Naive thymus-derived CD4-positive, alpha-beta T cell (primary cell): ENCODE measurements at regions of chr6 and their contacts with region 1.

Region 1: DNA sequence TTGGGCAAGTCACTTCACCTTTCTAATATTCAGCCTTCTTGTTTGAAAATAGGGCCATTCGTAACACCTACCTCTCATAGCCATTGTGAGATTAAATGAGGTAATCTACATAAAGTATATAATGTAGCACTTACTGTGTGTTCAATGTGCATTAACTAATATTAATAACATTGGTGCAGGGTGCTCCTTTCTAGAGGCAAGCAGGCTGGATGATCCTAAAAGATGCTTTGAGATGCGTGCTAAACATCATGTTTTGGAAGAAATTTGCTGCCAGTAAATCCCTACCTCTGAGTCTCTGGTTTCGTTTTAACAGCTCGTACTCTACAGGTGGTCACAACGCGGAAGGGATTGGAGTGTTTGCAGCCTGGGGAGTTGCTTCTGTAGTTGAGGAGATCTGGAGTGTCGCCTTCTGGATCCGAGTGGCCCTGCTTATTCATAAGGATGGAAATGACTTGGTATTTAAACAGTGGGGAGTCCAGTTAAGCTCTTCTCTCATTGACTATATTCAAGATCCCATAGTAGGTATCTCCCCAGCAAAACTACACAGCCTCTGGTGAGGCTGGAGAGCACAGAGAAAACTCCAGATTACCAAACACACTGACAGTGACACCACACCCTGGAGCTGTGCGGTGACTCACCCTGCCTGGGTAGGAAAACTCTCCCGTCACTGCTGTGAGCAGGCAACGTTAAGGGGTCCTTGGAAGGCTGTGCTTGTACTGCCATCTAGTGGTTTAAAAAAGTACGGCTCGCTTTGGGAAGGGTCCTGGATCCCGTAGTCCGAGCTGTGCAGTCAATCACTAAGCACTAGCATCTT is 107.9 kb downstream of the MAP3K7 start:
- DNase-seq: peak; percentile 57 to 87 (median 80)
- ATAC-seq: peak; percentile 98
- H3K4me3 ChIP-seq: no peak overlapping the region
- H3K4me3 Mint-ChIP-seq: peak overlapping the region in 4 of 10 donors; percentile 29 to 62 (median 53)
- H3K27ac ChIP-seq: no peak overlapping the region
- H3K27ac Mint-ChIP-seq: peak overlapping the region in 8 of 9 donors; percentile 3 to 89 (median 58)
- H3K4me1 ChIP-seq: peaks cover 6 to 13% of the 10 kb centered on the region in 2 donors
- H3K4me1 Mint-ChIP-seq: peaks cover 9 to 54% (median 26%) of the 10 kb centered on the region in 7 donors
- H3K27me3 ChIP-seq: no peaks in the 10 kb centered on the region
- H3K27me3 Mint-ChIP-seq: no peaks in the 10 kb centered on the region

Region 2: GRCh38 chr6:89432875-89433251 is 1046.1 kb before region 1 on chr6 and contains the start of gene ANKRD6:
- CTCF ChIA-PET with region 1: no interaction called
- POLR2A ChIA-PET with region 1: no interaction called
- intact Hi-C with region 1: loop called (anchors 1 to 2 kb)
- DNase-seq: peak; percentile 61 to 96 (median 81)
- ATAC-seq: peak; percentile 98
- H3K4me3 ChIP-seq: peak within 1 kb of the TSS; percentile 63
- H3K4me3 Mint-ChIP-seq: peak within 1 kb of the TSS; percentile 83 to 95 (median 90)
- H3K27ac ChIP-seq: peak within 1 kb of the TSS; percentile 46
- H3K27ac Mint-ChIP-seq: peak within 1 kb of the TSS; percentile 43 to 93 (median 82)
- H3K4me1 ChIP-seq: peaks cover 7 to 13% of the 10 kb centered on the region in 2 donors
- H3K4me1 Mint-ChIP-seq: peaks cover 9 to 36% (median 22%) of the 10 kb centered on the region in 7 donors
- H3K27me3 ChIP-seq: no peaks in the 10 kb centered on the region
- H3K27me3 Mint-ChIP-seq: peaks cover 0 to 58% (median 0%) of the 10 kb centered on the region in 5 donors
- total RNA-seq, gene ANKRD6: 3.1 to 6.6 (median 3.8) TPM

Region 3: GRCh38 chr6:89819336-89820130 is 659.5 kb before region 1 on chr6 and contains the start of gene MDN1:
- CTCF ChIA-PET with region 1: no interaction called
- POLR2A ChIA-PET with region 1: no interaction called
- intact Hi-C with region 1: loop called in 1 of 2 experiments (anchors 2 kb)
- DNase-seq: peak; percentile 60 to 89 (median 87)
- ATAC-seq: peak; percentile 96
- H3K4me3 ChIP-seq: peak within 1 kb of the TSS; percentile 66
- H3K4me3 Mint-ChIP-seq: peak within 1 kb of the TSS; percentile 92 to 97 (median 96)
- H3K27ac ChIP-seq: peak within 1 kb of the TSS; percentile 75
- H3K27ac Mint-ChIP-seq: peak within 1 kb of the TSS; percentile 92 to 98 (median 96)
- H3K4me1 ChIP-seq: peaks cover 12 to 19% of the 10 kb centered on the region in 2 donors
- H3K4me1 Mint-ChIP-seq: peaks cover 16 to 49% (median 36%) of the 10 kb centered on the region in 7 donors
- H3K27me3 ChIP-seq: no peaks in the 10 kb centered on the region
- H3K27me3 Mint-ChIP-seq: no peaks in the 10 kb centered on the region
- total RNA-seq, gene MDN1: 54.9 to 66.1 (median 63.0) TPM

Region 4: GRCh38 chr6:89970609-89971337 is 508.2 kb before region 1 on chr6:
- CTCF ChIA-PET with region 1: interaction called, 5 read pairs
- POLR2A ChIA-PET with region 1: interaction called, 3 read pairs
- intact Hi-C with region 1: loop called (anchors 1 kb)
- DNase-seq: peak in 7 of 9 donors; percentile 31 to 54 (median 39)
- ATAC-seq: peak; percentile 72
- H3K4me3 ChIP-seq: no peak overlapping the region
- H3K4me3 Mint-ChIP-seq: no peak overlapping the region
- H3K27ac ChIP-seq: no peak overlapping the region
- H3K27ac Mint-ChIP-seq: no peak overlapping the region
- H3K4me1 ChIP-seq: peaks cover 0 to 15% of the 10 kb centered on the region in 2 donors
- H3K4me1 Mint-ChIP-seq: peaks cover 9 to 53% (median 40%) of the 10 kb centered on the region in 7 donors
- H3K27me3 ChIP-seq: no peaks in the 10 kb centered on the region
- H3K27me3 Mint-ChIP-seq: no peaks in the 10 kb centered on the region

Region 5: GRCh38 chr6:90179190-90180169 is 299.5 kb before region 1 on chr6:
- CTCF ChIA-PET with region 1: no interaction called
- POLR2A ChIA-PET with region 1: no interaction called
- intact Hi-C with region 1: loop called (anchors 2 kb)
- DNase-seq: peak in 3 of 9 donors; percentile 39 to 53 (median 43)
- ATAC-seq: no peak
- H3K4me3 ChIP-seq: no peak overlapping the region
- H3K4me3 Mint-ChIP-seq: peak overlapping the region in 5 of 10 donors; percentile 8 to 83 (median 72)
- H3K27ac ChIP-seq: peak overlapping the region; percentile 64
- H3K27ac Mint-ChIP-seq: peak overlapping the region in 8 of 9 donors; percentile 58 to 97 (median 88)
- H3K4me1 ChIP-seq: peaks cover 0 to 69% of the 10 kb centered on the region in 2 donors
- H3K4me1 Mint-ChIP-seq: peaks cover 49 to 92% (median 86%) of the 10 kb centered on the region in 7 donors
- H3K27me3 ChIP-seq: no peaks in the 10 kb centered on the region
- H3K27me3 Mint-ChIP-seq: no peaks in the 10 kb centered on the region

Region 6: DNA sequence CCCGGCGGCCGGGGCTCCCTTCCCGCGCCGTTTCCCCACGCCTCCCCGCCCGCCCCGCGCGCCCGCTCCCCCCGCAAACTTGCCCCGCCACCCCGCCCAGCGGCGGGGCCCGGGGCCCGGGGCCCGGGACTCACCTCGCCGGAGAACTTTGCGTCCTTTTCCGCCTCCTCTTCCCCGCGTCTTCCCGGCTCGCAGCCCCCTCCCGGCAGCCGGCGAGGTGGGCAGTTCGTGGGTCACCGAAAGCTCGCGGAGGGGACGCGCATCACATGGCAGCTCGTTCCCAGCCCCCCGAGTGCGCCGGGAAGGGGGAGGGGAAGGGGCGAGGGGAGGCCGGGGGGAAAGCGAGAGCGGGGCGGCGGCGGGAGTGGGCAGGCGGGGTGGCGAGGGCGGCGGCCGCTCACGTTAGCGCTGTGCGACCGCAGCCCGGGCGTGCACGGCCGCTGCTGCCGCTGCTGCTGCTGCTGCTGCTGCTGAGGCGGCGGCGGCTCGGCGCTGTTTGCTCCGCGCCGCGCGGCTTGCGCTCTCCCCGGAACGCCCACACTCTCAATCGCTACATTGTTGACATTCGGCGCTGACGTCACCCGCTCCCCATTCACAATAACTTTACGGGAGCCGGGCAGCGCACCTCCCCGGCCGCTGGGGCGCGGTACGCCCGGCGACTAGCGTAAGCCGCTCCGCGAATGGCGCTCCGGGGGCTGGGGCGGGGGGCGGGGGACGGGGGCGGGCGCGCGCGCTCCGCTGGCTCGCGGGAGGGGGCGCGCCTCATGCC is 182.5 kb before region 1 on chr6 and contains the start of gene BACH2:
- CTCF ChIA-PET with region 1: interaction called, 3 read pairs
- POLR2A ChIA-PET with region 1: interaction called, 3 read pairs
- intact Hi-C with region 1: loop called (anchors 1 kb)
- DNase-seq: peak; percentile 84 to 97 (median 94)
- ATAC-seq: peak; percentile 85
- H3K4me3 ChIP-seq: peak within 1 kb of the TSS; percentile 59
- H3K4me3 Mint-ChIP-seq: peak within 1 kb of the TSS; percentile 79 to 97 (median 92)
- H3K27ac ChIP-seq: peak within 1 kb of the TSS; percentile 95
- H3K27ac Mint-ChIP-seq: peak within 1 kb of the TSS; percentile 89 to 100 (median 97)
- H3K4me1 ChIP-seq: peaks cover 7 to 26% of the 10 kb centered on the region in 2 donors
- H3K4me1 Mint-ChIP-seq: peaks cover 0 to 47% (median 38%) of the 10 kb centered on the region in 7 donors
- H3K27me3 ChIP-seq: no peaks in the 10 kb centered on the region
- H3K27me3 Mint-ChIP-seq: peaks cover 0 to 29% (median 0%) of the 10 kb centered on the region in 5 donors
- total RNA-seq, gene BACH2: 33.0 to 193 (median 133) TPM

Region 7: GRCh38 chr6:90643381-90643780 is 164.4 kb after region 1 on chr6:
- CTCF ChIA-PET with region 1: no interaction called
- POLR2A ChIA-PET with region 1: no interaction called
- intact Hi-C with region 1: no loop called
- DNase-seq: no peak
- ATAC-seq: no peak
- H3K4me3 ChIP-seq: no peak overlapping the region
- H3K4me3 Mint-ChIP-seq: no peak overlapping the region
- H3K27ac ChIP-seq: no peak overlapping the region
- H3K27ac Mint-ChIP-seq: no peak overlapping the region
- H3K4me1 ChIP-seq: no peaks in the 10 kb centered on the region
- H3K4me1 Mint-ChIP-seq: no peaks in the 10 kb centered on the region
- H3K27me3 ChIP-seq: no peaks in the 10 kb centered on the region
- H3K27me3 Mint-ChIP-seq: peaks cover 11 to 39% (median 23%) of the 10 kb centered on the region in 5 donors